HCT116 (cell line): ENCODE measurements at regions of chr9 and their contacts with region 1.

Region 1: DNA sequence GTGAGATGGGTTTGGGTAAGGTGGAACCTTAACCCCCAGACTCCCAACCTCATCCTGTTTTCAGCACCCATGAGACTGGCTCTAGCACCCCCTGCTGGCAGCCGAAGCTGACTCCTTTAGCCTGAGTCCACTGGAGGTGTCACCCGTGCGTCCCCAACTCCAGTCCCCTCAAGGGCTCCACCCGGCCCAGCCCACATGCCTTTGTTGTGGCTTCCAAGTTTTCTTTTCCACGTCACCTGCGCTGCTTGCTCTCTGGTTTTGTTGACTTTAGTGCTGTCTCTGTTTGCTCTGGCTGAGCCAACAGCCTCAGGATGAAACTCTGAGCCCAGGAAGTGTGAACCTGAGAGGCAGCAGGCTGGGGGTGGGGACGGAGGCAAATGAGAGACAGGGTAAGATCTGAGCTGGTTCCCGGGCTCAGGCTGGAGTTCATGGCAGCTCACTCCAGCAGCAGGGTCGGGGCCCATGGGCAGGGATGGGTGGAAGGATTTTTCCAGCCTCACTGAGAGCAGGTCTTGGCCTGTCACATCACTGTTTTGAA is 13.2 kb upstream of the AQP7 start:
- DNase-seq: peak; percentile 68
- ATAC-seq: peak; percentile 94
- H3K4me3 ChIP-seq: peak overlapping the region in 1 of 2 experiments; percentile 9; a peak in 2 of 4 replicates
- H3K27ac ChIP-seq: no peak overlapping the region; the same call in 1 of the 2 replicates
- H3K4me1 ChIP-seq: peaks cover 35 to 42% of the 10 kb centered on the region in 2 experiments
- H3K27me3 ChIP-seq: no peaks in the 10 kb centered on the region
- CTCF ChIP-seq: peak; percentile 67 to 92 (median 92); a peak in 5 of 6 replicates
- POLR2A ChIP-seq: no peak
- RAD21 ChIP-seq: peak; percentile 59

Region 2: GRCh38 chr9:33350310-33350709 is 65.3 kb before region 1 on chr9:
- CTCF ChIA-PET with region 1: no interaction called
- POLR2A ChIA-PET with region 1: no interaction called
- RAD21 ChIA-PET with region 1: no interaction called
- intact Hi-C with region 1: loop called (anchors 10 kb)
- DNase-seq: no peak
- ATAC-seq: no peak
- H3K4me3 ChIP-seq: no peak overlapping the region
- H3K27ac ChIP-seq: no peak overlapping the region
- H3K4me1 ChIP-seq: no peaks in the 10 kb centered on the region
- H3K27me3 ChIP-seq: no peaks in the 10 kb centered on the region
- CTCF ChIP-seq: no peak
- POLR2A ChIP-seq: no peak
- RAD21 ChIP-seq: no peak

Region 3: DNA sequence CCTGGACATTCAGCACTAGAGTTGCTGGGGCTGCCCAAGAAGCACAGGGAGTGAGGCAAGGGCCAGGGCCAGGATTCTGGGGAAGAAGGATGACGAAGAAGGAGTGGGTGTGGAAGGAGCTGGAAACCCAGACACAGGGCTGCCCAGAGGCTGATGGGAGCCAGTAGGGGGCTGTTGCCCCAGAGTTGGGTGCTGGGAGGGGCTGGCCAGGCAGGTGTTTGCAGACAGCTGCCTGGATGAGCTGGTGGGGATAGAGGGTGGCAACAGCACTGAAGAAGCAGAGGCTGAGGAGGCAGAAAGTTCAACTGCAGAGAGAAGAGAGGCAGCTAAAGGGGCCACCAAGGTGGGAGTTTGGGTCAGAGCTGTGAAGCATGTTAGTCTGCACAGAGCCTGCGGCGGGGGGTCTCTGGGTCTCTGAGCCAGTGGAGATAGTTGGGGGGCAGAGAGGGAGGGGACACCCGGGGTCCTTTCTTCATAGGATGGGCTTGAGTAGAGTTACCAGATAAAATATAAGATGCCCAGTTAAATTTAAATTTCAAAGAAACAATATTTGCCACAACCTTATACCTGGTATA is 10.7 kb before region 1 on chr9:
- CTCF ChIA-PET with region 1: interaction called, 20 read pairs
- POLR2A ChIA-PET with region 1: no interaction called
- RAD21 ChIA-PET with region 1: no interaction called
- intact Hi-C with region 1: no loop called
- DNase-seq: no peak
- ATAC-seq: 0 out of 2 replicates have a peak, but pooled peaks have one; percentile 14
- H3K4me3 ChIP-seq: no peak overlapping the region
- H3K27ac ChIP-seq: no peak overlapping the region
- H3K4me1 ChIP-seq: peaks cover 0 to 3% of the 10 kb centered on the region in 2 experiments; a peak in 1 of 4 replicates
- H3K27me3 ChIP-seq: no peaks in the 10 kb centered on the region
- CTCF ChIP-seq: no peak
- POLR2A ChIP-seq: no peak
- RAD21 ChIP-seq: no peak

Region 4: GRCh38 chr9:33430942-33431341 is 15.4 kb after region 1 on chr9:
- CTCF ChIA-PET with region 1: interaction called, 12 read pairs
- POLR2A ChIA-PET with region 1: no interaction called
- RAD21 ChIA-PET with region 1: no interaction called
- intact Hi-C with region 1: no loop called
- DNase-seq: no peak
- ATAC-seq: peak; percentile 34; the same call in 1 of the 2 replicates
- H3K4me3 ChIP-seq: no peak overlapping the region
- H3K27ac ChIP-seq: no peak overlapping the region
- H3K4me1 ChIP-seq: peaks cover 0 to 9% of the 10 kb centered on the region in 2 experiments; a peak in 2 of 4 replicates
- H3K27me3 ChIP-seq: no peaks in the 10 kb centered on the region
- CTCF ChIP-seq: no peak
- POLR2A ChIP-seq: no peak
- RAD21 ChIP-seq: no peak

Region 5: DNA sequence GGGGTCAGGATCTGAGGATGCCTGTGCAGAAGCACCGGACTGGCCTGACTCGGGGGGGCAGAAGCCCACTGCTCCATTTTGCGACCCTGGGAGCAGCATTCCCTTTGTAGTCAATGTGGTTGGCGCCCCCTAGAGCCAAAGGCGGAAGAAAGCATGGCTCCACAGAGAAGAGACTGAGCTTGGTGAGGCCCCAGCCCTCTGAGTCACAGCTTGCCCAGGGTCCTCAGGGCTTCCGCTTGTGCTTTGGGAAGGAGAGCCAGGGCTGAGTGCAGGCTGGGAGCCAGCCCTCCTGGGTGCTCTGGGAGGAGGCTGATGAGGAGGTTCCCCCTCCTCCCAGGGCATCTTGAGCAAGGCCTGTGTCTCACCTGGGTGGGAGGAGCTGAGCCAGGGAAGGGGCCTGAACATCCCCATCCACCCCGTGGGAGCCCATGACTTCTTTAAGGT is 37.3 kb after region 1 on chr9:
- CTCF ChIA-PET with region 1: interaction called, 35 read pairs
- POLR2A ChIA-PET with region 1: interaction called, 3 read pairs
- RAD21 ChIA-PET with region 1: no interaction called
- intact Hi-C with region 1: no loop called
- DNase-seq: peak; percentile 63
- ATAC-seq: peak; percentile 87
- H3K4me3 ChIP-seq: peak overlapping the region in 1 of 2 experiments; percentile 13; a peak in 2 of 4 replicates
- H3K27ac ChIP-seq: peak overlapping the region; percentile 49
- H3K4me1 ChIP-seq: peaks cover 36 to 58% of the 10 kb centered on the region in 2 experiments
- H3K27me3 ChIP-seq: no peaks in the 10 kb centered on the region
- CTCF ChIP-seq: peak in 2 of 3 experiments; percentile 91; a peak in 4 of 6 replicates
- POLR2A ChIP-seq: no peak
- RAD21 ChIP-seq: no peak

Region 6: GRCh38 chr9:33466565-33467495 is 51.3 kb after region 1 on chr9:
- CTCF ChIA-PET with region 1: interaction called, 11 read pairs
- POLR2A ChIA-PET with region 1: no interaction called
- RAD21 ChIA-PET with region 1: interaction called in 1 of 2 experiments, 3 read pairs
- intact Hi-C with region 1: no loop called
- DNase-seq: no peak
- ATAC-seq: peak; percentile 84
- H3K4me3 ChIP-seq: no peak overlapping the region
- H3K27ac ChIP-seq: no peak overlapping the region
- H3K4me1 ChIP-seq: peaks cover 0 to 1% of the 10 kb centered on the region in 2 experiments; a peak in 2 of 4 replicates
- H3K27me3 ChIP-seq: no peaks in the 10 kb centered on the region
- CTCF ChIP-seq: peak; percentile 88 to 97 (median 93)
- POLR2A ChIP-seq: no peak
- RAD21 ChIP-seq: peak; percentile 95

Region 7: DNA sequence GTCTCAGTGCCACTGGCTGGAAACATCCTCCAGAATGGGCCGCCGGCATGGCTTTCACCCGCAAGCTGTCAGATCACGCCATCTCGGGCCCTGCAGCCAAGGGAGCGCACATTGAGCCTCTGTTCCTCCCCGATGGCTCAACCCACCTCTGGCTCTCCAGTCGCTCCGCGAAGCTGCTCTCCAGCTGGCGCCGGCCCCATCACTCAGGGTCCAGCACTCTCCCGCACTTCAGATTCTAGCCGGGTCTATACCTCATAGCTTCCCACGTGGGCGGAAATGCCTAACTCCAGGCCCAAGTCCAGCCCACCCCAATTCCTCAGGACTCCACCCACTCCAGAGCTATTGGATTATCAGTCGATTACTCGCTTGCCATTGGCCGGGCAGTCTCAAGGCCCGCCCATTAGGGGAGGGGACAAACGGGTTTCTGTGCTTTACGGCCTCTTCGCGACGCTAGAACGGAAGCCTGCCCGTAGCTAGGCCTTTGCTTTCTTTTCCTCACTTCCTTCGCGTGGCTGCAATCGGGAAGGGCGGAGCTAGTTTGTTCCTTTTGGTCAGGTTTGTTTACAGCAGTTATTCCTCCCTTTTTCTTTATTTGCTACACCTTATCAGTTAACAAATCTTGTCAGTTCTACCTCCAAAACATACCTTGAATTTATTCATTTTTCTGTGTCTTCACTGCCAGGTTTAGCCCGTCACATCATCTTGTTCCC is 58.2 kb after region 1 on chr9 and contains the start of gene NOL6:
- CTCF ChIA-PET with region 1: interaction called, 15 read pairs
- POLR2A ChIA-PET with region 1: interaction called, 3 read pairs
- RAD21 ChIA-PET with region 1: no interaction called
- intact Hi-C with region 1: no loop called
- DNase-seq: peak; percentile 99
- ATAC-seq: peak; percentile 100
- H3K4me3 ChIP-seq: peak within 1 kb of the TSS; percentile 90 to 92
- H3K27ac ChIP-seq: peak within 1 kb of the TSS; percentile 27
- H3K4me1 ChIP-seq: peaks cover 8 to 16% of the 10 kb centered on the region in 2 experiments; a peak in 3 of 4 replicates
- H3K27me3 ChIP-seq: no peaks in the 10 kb centered on the region
- CTCF ChIP-seq: no peak
- POLR2A ChIP-seq: peak; percentile 54
- RAD21 ChIP-seq: no peak
- total RNA-seq, gene NOL6: 36.4 TPM